HAP-1 (cell line): ENCODE measurements at regions of chr2 and their contacts with region 1.

Region 1: GRCh38 chr2:74919827-74920226 is 38.6 kb upstream of the POLE4 start:
- DNase-seq: peak; percentile 65 to 88
- H3K4me3 ChIP-seq: peak overlapping the region; percentile 36
- H3K4me1 ChIP-seq: no peaks in the 10 kb centered on the region
- H3K27me3 ChIP-seq: no peaks in the 10 kb centered on the region

Region 2: GRCh38 chr2:74856004-74856578 is 63.7 kb before region 1 on chr2:
- in situ Hi-C with region 1: no loop called
- DNase-seq: no peak
- H3K4me3 ChIP-seq: no peak overlapping the region
- H3K4me1 ChIP-seq: no peaks in the 10 kb centered on the region
- H3K27me3 ChIP-seq: no peaks in the 10 kb centered on the region

Region 3: GRCh38 chr2:75241696-75242095 is 321.9 kb after region 1 on chr2:
- in situ Hi-C with region 1: loop called (anchors 25 kb)
- DNase-seq: peak in 1 of 2 experiments; percentile 50
- H3K4me3 ChIP-seq: no peak overlapping the region
- H3K4me1 ChIP-seq: no peaks in the 10 kb centered on the region
- H3K27me3 ChIP-seq: no peaks in the 10 kb centered on the region

Region 4: DNA sequence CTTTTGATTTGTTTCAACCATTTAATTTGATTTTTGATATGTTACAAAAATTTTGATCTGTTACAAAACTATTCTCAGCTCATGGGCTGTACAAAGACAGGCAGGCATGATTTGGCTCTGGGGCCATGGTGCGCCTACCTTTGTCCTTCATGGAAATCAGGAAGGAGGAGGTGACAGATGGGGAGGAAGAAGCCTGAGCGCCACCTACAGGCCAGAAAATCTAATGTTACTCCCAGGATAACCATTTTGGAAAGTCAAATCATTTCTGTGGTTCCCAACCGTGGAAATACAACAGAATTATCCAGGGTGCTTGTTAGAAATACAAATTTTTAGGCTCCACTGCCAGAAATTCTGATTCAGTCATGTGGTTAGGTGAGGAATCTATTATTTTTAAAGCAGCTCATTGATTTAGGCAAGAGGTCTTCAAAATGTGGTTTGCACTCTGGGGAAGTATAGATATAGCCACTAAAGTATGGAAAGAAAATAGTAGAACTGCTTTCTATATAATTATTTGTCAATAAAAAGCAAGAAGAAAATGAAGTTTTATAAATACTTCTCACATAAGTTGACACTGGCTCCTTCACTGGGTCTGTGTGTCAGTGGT is 547.0 kb after region 1 on chr2:
- in situ Hi-C with region 1: loop called (anchors 25 kb)
- DNase-seq: peak; percentile 74 to 87
- H3K4me3 ChIP-seq: no peak overlapping the region
- H3K4me1 ChIP-seq: peaks cover 15% of the 10 kb centered on the region
- H3K27me3 ChIP-seq: no peaks in the 10 kb centered on the region